ENCODE measurements at regions of chr11 and their contacts with region 1.

Region 1: GRCh38 chr11:2314525-2315394 is 12.9 kb downstream of the TSPAN32 start:
- DNase-seq: peak; percentile 67
- H3K4me3 ChIP-seq: no peak overlapping the region
- H3K27ac ChIP-seq: peak overlapping the region; percentile 71 to 84 (median 76)
- H3K4me1 ChIP-seq: peaks cover 7 to 25% (median 14%) of the 10 kb centered on the region in 4 donors
- H3K27me3 ChIP-seq: no peaks in the 10 kb centered on the region
- CTCF ChIP-seq: no peak
- EP300 ChIP-seq: no peak
- POLR2A ChIP-seq: no peak

Region 2: DNA sequence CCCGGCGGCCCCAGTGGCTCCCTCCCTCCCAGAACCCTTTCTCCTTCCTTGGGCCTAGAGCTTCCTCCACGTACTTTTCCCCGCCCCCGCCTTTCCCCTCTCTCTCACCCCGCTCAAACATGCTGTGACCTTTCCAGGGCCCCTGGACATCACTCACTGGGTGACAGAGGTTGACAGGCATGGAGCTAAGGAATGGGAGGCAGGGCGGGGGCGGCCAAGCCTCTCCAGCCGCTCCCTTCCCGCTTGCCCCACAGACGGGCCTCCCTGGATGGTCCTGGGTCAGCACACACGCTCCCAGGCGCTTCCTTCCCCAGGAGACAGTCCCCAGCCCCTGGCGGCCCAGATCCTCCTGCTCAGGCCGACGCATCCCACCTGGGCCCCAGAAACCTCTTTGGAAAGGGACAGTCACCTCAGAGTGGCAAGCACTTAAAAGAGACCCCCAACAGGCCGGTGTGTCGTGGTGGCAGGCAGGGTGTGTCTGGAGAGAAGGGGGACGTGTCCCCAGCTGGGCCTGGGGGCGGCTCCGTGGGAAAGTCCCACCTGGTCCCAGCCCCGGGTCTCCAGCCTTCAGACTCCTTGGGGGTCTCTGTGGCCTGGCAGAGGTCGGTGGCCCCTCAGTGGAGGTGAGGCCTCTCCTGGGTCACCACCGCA is 326.0 kb before region 1 on chr11:
- in situ Hi-C with region 1: no loop called
- intact Hi-C with region 1: no loop called
- DNase-seq: no peak
- H3K4me3 ChIP-seq: no peak overlapping the region
- H3K27ac ChIP-seq: no peak overlapping the region
- H3K4me1 ChIP-seq: no peaks in the 10 kb centered on the region
- H3K27me3 ChIP-seq: no peaks in the 10 kb centered on the region
- CTCF ChIP-seq: no peak
- EP300 ChIP-seq: no peak
- POLR2A ChIP-seq: no peak

Region 3: DNA sequence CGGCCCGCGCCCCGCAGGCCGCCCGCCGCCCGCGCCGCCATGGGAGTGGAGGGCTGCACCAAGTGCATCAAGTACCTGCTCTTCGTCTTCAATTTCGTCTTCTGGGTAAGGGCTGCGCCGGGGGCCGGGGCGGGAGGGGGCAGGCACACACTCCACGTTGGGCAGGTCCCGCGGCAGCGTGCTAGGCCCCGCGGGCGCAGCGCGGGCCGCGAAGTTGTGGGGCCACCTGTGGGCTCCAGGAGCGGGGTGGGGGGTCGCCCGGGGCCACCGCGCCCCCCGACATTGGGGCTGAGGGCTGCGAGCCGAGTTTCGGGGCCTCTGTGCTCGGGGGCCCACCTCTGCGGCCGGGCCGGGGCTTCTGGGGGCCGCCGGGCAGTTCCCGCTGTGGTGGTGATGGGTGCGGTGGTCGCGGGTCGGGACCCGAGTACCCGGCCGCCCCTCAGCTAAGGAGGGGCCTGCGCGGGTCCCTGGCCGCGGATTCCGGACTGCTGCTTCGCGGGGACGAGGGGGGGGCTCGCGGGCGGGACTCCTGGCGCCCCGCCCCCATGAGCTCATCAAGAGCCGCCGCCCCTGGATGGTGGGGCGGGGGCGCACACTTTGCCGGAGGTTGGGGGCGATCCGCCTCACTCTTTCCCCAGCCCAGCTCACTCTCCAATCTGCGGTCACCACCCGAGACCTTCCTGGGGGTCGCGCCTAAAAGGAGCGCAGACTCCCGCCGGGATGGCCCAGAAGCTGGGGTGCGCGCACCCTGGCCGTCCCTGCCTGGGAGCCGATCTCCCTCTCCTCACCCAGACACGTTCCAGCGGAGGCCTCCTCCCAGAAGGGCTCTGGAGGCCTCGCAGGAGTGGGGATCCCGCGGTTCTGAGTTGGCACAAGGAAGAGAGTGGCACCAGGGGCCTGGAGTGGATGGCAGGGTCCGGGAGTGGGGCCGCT is 63.0 kb after region 1 on chr11:
- in situ Hi-C with region 1: no loop called
- intact Hi-C with region 1: loop called (anchors 2 kb)
- DNase-seq: peak; percentile 72
- H3K4me3 ChIP-seq: peak overlapping the region; percentile 68 to 99 (median 91)
- H3K27ac ChIP-seq: peak overlapping the region; percentile 92 to 99 (median 96)
- H3K4me1 ChIP-seq: peaks cover 40 to 62% (median 57%) of the 10 kb centered on the region in 4 donors
- H3K27me3 ChIP-seq: no peaks in the 10 kb centered on the region
- CTCF ChIP-seq: no peak
- EP300 ChIP-seq: no peak
- POLR2A ChIP-seq: no peak